ENCODE measurements at regions of chr1 and their contacts with region 1.

Region 1: GRCh38 chr1:152398812-152399698 is 15.0 kb downstream of the CRNN start:
- DNase-seq: peak; percentile 59
- H3K4me3 ChIP-seq: no peak overlapping the region
- H3K27ac ChIP-seq: no peak overlapping the region
- H3K4me1 ChIP-seq: no peaks in the 10 kb centered on the region
- H3K27me3 ChIP-seq: peaks cover 27% of the 10 kb centered on the region
- CTCF ChIP-seq: peak; percentile 81 to 93

Region 2: GRCh38 chr1:152440635-152441471 is 41.8 kb after region 1 on chr1:
- CTCF ChIA-PET with region 1: interaction called, 28 read pairs
- dilution Hi-C with region 1: no loop called
- in situ Hi-C with region 1: loop called in 1 of 2 experiments (anchors 10 kb)
- intact Hi-C with region 1: loop called (anchors 1 kb)
- DNase-seq: peak; percentile 68
- H3K4me3 ChIP-seq: no peak overlapping the region
- H3K27ac ChIP-seq: no peak overlapping the region
- H3K4me1 ChIP-seq: peaks cover 34% of the 10 kb centered on the region
- H3K27me3 ChIP-seq: no peaks in the 10 kb centered on the region
- CTCF ChIP-seq: peak; percentile 91 to 92

Measured in mammary epithelial cell (primary cell).